Ascending aorta (tissue), 2 donors: ENCODE measurements at regions of chr13 and their contacts with region 1.

Region 1: GRCh38 chr13:60838581-60838980 is 441.6 kb downstream of the TDRD3 start:
- DNase-seq: no peak
- H3K4me3 ChIP-seq: no peak overlapping the region
- H3K27ac ChIP-seq: no peak overlapping the region
- H3K4me1 ChIP-seq: peaks cover 0 to 4% of the 10 kb centered on the region in 2 donors
- H3K27me3 ChIP-seq: no peaks in the 10 kb centered on the region
- CTCF ChIP-seq: no peak

Region 2: GRCh38 chr13:60765700-60766411 is 72.7 kb before region 1 on chr13:
- intact Hi-C with region 1: loop called (anchors 5 kb)
- DNase-seq: no peak
- H3K4me3 ChIP-seq: no peak overlapping the region
- H3K27ac ChIP-seq: no peak overlapping the region
- H3K4me1 ChIP-seq: peaks cover 0 to 4% of the 10 kb centered on the region in 2 donors
- H3K27me3 ChIP-seq: no peaks in the 10 kb centered on the region
- CTCF ChIP-seq: no peak